Left ventricle myocardium superior (tissue), 1 donor: ENCODE measurements at regions of chr10 and their contacts with region 1.

Region 1: DNA sequence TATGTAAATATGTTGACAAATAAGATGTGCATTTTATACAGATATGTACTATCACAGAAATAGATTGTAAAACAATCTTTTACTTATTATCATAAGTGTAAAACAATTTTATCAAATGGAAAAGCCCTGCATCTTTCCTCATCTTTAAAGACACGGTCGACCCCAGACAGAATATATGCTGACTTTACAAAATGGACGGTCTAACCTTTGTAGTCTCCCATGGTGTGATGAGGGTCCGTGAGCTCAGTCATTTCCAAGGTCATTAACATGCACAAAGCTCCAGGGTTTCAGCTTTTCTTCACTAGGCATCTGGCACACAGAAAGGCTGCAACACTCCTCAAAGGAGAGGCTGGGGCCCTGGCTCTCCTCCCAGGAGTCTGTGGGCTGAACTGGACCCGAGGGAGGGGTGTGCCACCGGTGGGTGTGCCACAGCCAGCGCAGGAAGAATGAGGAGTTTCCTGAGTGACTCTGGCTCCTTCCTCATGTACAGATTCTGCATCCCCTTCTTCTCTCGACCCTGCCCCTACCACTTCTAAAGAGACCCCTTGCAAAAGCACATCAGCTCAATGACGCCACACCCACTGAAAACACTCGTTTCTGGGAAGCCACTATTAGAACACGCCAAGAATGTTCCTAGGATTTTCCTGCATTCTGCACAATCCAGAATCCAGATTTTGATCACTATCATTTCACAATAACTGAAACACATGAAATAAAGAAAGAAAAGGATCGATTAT is 26.2 kb upstream of the ABLIM1 start:
- DNase-seq: peak; percentile 76
- ATAC-seq: peak; percentile 63

Region 2: GRCh38 chr10:114615600-114616007 is 68.6 kb before region 1 on chr10:
- intact Hi-C with region 1: no loop called
- DNase-seq: no peak
- ATAC-seq: no peak

Region 3: DNA sequence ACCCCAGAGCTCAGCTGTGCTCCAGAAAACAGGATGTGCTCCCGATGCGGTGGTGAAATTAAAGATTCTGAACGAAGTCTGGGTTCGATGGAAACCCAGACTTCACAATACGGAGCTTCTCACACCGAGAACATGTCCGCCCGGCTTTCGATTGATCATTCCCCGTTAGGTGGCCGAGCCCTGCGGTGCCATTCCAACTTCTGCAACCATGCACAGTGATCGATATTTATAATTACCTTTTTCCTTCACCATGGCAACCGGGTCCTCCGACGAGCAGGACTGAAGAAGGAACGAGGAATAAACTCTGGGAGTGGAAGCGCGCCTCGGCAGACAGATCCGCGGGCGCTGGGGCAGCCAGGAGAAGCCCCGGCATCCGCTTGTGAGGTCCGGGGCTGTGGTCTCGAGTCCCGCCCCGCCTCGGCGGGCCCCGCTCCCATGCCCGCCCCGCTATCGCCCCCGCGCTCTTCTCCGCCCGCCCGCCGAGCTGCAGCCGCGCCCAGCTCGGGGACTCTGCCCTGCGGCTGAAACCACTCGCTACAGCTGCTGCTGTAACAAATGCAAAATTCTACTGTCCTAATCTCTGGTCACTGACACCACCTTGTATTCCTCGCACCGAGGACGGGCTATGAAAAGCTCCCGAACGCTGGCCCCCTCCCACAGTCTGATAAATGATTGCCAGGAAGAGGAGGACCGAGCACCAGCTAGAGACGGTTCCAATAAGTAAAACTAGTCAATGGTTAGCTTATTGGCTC is 52.4 kb before region 1 on chr10:
- intact Hi-C with region 1: loop called (anchors 5 kb)
- DNase-seq: peak; percentile 76
- ATAC-seq: peak; percentile 56